ENCODE measurements at regions of chr22 and their contacts with region 1.

Region 1: GRCh38 chr22:17266251-17266971 is 47.2 kb upstream of the ADA2 start:
- DNase-seq: no peak
- ATAC-seq: no peak
- H3K4me3 ChIP-seq: no peak overlapping the region
- H3K27ac ChIP-seq: no peak overlapping the region
- H3K4me1 ChIP-seq: no peaks in the 10 kb centered on the region
- H3K27me3 ChIP-seq: no peaks in the 10 kb centered on the region
- CTCF ChIP-seq: no peak

Region 2: GRCh38 chr22:17149076-17149810 is 117.2 kb before region 1 on chr22:
- CTCF ChIA-PET with region 1: no interaction called
- POLR2A ChIA-PET with region 1: interaction called, 10 read pairs
- in situ Hi-C with region 1: no loop called
- intact Hi-C with region 1: no loop called
- DNase-seq: no peak
- ATAC-seq: no peak
- H3K4me3 ChIP-seq: no peak overlapping the region
- H3K27ac ChIP-seq: no peak overlapping the region
- H3K4me1 ChIP-seq: no peaks in the 10 kb centered on the region
- H3K27me3 ChIP-seq: no peaks in the 10 kb centered on the region
- CTCF ChIP-seq: no peak

Region 3: GRCh38 chr22:17314487-17314886 is 48.1 kb after region 1 on chr22:
- CTCF ChIA-PET with region 1: no interaction called
- POLR2A ChIA-PET with region 1: no interaction called
- in situ Hi-C with region 1: no loop called
- intact Hi-C with region 1: loop called (anchors 5 kb)
- DNase-seq: no peak
- ATAC-seq: no peak
- H3K4me3 ChIP-seq: no peak overlapping the region
- H3K27ac ChIP-seq: no peak overlapping the region
- H3K4me1 ChIP-seq: no peaks in the 10 kb centered on the region
- H3K27me3 ChIP-seq: no peaks in the 10 kb centered on the region
- CTCF ChIP-seq: no peak